Prostate gland (tissue), 2 donors: ENCODE measurements at regions of chr7 and their contacts with region 1.

Region 1: GRCh38 chr7:123410273-123410904 is 124.0 kb downstream of the IQUB start:
- DNase-seq: peak; percentile 5
- H3K4me3 ChIP-seq: no peak overlapping the region
- H3K27ac ChIP-seq: peak overlapping the region; percentile 2 to 43
- H3K4me1 ChIP-seq: no peaks in the 10 kb centered on the region
- H3K27me3 ChIP-seq: no peaks in the 10 kb centered on the region
- CTCF ChIP-seq: no peak
- POLR2A ChIP-seq: no peak

Region 2: DNA sequence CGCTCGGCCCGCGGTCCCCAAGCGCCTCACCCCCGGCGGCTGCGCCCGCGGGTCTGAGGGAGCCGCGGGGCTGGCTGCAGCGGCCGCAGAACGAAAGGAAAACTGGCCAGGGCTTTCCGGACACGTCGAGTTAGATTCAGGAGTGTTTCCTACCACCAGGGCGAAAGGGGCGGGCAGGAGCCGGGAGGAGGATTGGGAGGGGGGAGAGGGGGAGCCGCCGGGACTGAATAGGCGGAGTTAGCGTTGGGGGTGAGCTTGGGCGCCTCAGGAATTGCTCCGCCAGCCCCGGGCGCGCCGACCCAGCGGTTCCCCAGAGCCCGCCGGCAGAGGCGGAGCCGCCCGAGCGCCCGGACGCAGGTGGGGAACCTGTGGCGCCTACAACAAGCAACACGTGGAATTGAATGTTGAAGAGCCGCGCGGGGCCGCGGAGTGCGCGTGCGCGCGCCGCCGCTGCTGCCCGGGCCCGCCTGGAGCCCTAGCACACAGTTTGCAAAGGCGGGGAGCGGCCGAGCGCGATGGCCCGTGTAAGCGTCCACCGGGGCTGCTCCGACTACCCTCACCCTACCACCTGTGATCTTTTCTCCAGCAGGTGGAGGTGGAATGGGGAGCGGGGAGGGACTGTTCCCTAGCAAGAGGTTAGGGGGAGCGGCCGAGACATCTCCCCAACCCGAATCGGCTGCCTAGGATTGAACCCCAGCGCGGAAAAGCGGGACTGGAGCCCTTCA is 523.9 kb before region 1 on chr7 and contains the start of gene CADPS2:
- intact Hi-C with region 1: loop called (anchors 5 kb)
- DNase-seq: peak; percentile 87
- H3K4me3 ChIP-seq: peak within 1 kb of the TSS; percentile 77 to 82
- H3K27ac ChIP-seq: peak within 1 kb of the TSS; percentile 92 to 95
- H3K4me1 ChIP-seq: no peaks in the 10 kb centered on the region
- H3K27me3 ChIP-seq: no peaks in the 10 kb centered on the region
- CTCF ChIP-seq: peak in 3 of 4 experiments; percentile 10 to 70 (median 49)
- POLR2A ChIP-seq: peak; percentile 70
- total RNA-seq, gene CADPS2: 22.2 to 50.4 TPM

Region 3: DNA sequence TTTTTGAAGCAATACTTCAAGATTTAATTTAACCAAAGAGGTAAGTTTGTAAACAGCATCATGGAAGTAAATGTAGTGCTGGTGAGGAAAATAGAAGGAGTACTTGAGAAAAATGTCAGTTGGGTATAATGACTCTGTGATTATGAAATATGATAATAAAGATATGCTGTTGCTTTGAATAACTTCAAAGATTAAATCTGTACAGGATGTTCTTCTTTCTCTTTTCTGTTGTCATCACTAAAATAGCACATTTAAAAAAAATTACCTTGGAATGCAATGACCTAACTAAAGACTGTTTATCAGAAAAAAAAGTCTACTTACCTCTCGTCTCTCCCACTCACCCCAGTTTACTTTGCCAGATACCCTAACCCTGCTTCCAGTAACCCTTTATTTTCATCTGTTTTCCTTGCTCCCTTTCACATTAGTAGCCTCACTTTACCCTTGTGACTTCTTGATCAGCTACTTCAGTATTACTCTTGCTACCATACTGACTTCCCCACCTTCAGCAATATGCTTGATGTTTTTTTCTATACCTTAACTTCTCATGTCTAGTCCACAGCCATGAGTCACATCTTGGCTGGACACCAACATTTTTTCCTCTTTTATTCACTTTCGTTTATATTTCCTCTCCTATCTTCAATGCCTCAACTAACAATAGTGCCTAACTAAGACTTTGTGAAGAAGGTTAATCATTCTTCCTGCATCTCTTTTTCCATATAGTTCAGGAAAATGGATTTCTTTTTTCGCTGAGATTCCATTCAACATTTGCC is 385.2 kb before region 1 on chr7:
- intact Hi-C with region 1: loop called (anchors 10 kb)
- DNase-seq: no peak
- H3K4me3 ChIP-seq: no peak overlapping the region
- H3K27ac ChIP-seq: no peak overlapping the region
- H3K4me1 ChIP-seq: no peaks in the 10 kb centered on the region
- H3K27me3 ChIP-seq: no peaks in the 10 kb centered on the region
- CTCF ChIP-seq: no peak
- POLR2A ChIP-seq: no peak

Region 4: GRCh38 chr7:123231027-123232000 is 179.1 kb before region 1 on chr7:
- intact Hi-C with region 1: loop called (anchors 5 kb)
- DNase-seq: no peak
- H3K4me3 ChIP-seq: no peak overlapping the region
- H3K27ac ChIP-seq: no peak overlapping the region
- H3K4me1 ChIP-seq: no peaks in the 10 kb centered on the region
- H3K27me3 ChIP-seq: no peaks in the 10 kb centered on the region
- CTCF ChIP-seq: no peak
- POLR2A ChIP-seq: no peak

Region 5: DNA sequence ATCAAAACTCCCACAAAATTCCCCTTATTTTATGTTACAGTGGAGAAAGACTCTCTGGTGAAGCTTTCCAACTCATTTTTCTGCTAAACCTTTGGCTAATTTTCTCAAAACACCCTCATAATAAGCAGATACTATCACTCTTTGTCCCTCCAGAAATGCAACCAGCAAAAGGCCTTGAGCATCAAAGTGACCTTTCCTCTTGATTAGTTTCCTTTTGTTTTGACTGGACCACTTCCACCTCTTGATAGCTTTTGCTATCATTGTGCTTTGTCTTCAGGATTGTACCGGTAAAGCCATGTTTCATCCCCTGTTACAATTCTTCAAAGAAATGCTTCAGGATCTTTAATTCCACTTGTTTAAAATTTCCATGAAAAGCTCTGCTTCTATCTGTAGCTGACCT is 95.5 kb before region 1 on chr7:
- intact Hi-C with region 1: no loop called
- DNase-seq: no peak
- H3K4me3 ChIP-seq: no peak overlapping the region
- H3K27ac ChIP-seq: no peak overlapping the region
- H3K4me1 ChIP-seq: no peaks in the 10 kb centered on the region
- H3K27me3 ChIP-seq: no peaks in the 10 kb centered on the region
- CTCF ChIP-seq: no peak
- POLR2A ChIP-seq: no peak

Region 6: GRCh38 chr7:123327661-123328060 is 82.7 kb before region 1 on chr7:
- intact Hi-C with region 1: no loop called
- DNase-seq: no peak
- H3K4me3 ChIP-seq: no peak overlapping the region
- H3K27ac ChIP-seq: no peak overlapping the region
- H3K4me1 ChIP-seq: no peaks in the 10 kb centered on the region
- H3K27me3 ChIP-seq: no peaks in the 10 kb centered on the region
- CTCF ChIP-seq: no peak
- POLR2A ChIP-seq: no peak

Region 7: DNA sequence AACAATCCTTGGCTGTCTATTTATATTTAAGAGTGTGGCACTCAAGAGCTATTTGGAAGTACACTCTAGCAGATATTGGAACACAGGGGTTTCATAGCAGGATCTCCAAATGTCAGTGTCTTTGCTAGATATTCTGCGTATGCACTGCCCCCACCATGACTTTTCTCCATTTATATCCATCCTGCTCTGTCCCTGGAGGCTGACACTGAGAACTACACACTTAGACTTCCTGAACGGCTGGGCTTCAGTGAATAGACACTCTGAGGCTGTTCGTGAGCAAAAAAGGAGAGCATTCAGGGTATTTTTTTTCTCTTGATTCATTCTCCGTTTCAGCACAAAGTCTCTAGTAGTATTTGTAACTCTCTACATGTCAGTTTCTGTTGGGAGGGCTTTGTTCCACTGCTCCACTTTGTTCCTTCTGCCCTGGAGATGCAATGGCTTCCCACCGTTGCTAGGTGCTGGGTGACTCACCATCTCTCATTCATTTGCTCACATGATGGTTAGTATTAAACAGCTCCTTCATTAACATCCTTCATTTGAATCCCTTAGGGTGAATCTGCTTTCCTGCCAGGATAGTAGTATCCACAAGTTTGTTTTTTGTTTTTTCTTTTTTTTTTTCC is 54.7 kb before region 1 on chr7:
- intact Hi-C with region 1: no loop called
- DNase-seq: no peak
- H3K4me3 ChIP-seq: no peak overlapping the region
- H3K27ac ChIP-seq: no peak overlapping the region
- H3K4me1 ChIP-seq: no peaks in the 10 kb centered on the region
- H3K27me3 ChIP-seq: no peaks in the 10 kb centered on the region
- CTCF ChIP-seq: no peak
- POLR2A ChIP-seq: no peak

Region 8: GRCh38 chr7:123534383-123535260 is 124.2 kb after region 1 on chr7 and contains the start of gene IQUB:
- intact Hi-C with region 1: loop called (anchors 2 kb)
- DNase-seq: peak; percentile 98
- H3K4me3 ChIP-seq: peak within 1 kb of the TSS; percentile 46 to 61
- H3K27ac ChIP-seq: peak within 1 kb of the TSS; percentile 86 to 92
- H3K4me1 ChIP-seq: no peaks in the 10 kb centered on the region
- H3K27me3 ChIP-seq: no peaks in the 10 kb centered on the region
- CTCF ChIP-seq: no peak
- POLR2A ChIP-seq: peak; percentile 49
- total RNA-seq, gene IQUB: 2.0 to 4.8 TPM